ENCODE measurements at regions of chr12 and their contacts with region 1.

Region 1: DNA sequence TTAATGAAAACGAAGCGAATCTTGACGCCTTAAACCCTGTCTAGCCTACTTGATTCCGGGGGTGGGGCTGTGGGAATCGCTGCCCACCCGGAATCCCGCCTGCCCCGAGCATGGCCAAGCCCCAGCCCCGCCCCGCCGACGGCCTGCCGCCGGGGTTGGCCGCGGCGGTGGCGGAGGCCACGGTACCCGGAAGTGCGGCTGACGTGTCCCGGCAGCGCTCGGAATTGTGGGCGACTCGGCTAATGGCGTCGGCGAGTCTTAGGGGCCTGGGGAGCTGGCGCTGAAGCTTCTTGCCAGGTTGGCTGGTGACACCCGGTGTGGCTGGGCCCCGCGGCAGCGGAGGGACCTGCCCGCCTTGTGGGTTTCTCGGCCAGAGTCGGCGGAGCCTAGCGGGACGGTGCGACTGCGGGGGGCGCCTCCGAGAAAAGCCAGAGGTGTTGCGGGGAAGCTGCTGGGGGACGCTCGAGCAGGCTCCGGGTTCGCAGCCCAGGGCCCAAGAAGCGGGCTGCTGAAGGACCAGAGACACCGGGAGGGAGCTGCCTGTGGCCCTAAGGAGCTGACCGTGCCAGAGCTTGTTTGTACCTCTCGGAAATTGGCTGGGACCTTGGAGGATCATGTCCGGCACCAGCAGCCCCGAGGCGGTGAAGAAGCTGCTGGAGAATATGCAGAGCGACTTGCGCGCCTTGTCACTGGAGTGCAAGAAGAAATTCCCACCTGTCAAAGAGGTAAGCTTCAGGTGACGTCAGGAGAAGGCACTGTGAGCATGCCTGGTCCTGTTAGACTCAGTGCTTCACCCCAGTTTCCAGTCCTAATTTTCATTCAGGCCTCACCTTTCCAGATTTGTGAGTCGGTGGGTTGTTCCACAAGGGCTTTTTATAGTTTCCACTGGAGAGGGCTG is at the start of gene MON2:
- DNase-seq: peak; percentile 72 to 93 (median 86)
- H3K4me3 ChIP-seq: peak within 1 kb of the TSS; percentile 59 to 99 (median 95)
- H3K27ac ChIP-seq: peak within 1 kb of the TSS in 58 of 59 donors; percentile 55 to 96 (median 88)
- H3K27me3 ChIP-seq: no peaks in the 10 kb centered on the region
- CTCF ChIP-seq: peak in 35 of 56 donors; percentile 4 to 59 (median 35)
- total RNA-seq, gene MON2: 59.2 to 136 (median 95.1) TPM

Region 2: GRCh38 chr12:62259993-62260732 is 206.7 kb before region 1 on chr12 and contains the start of gene USP15:
- intact Hi-C with region 1: loop called in 1 of 2 experiments (anchors 2 kb)
- DNase-seq: peak; percentile 90 to 97 (median 93)
- H3K4me3 ChIP-seq: peak within 1 kb of the TSS; percentile 64 to 100 (median 94)
- H3K27ac ChIP-seq: peak within 1 kb of the TSS; percentile 81 to 99 (median 93)
- H3K27me3 ChIP-seq: no peaks in the 10 kb centered on the region
- CTCF ChIP-seq: peak; percentile 17 to 88 (median 74)
- total RNA-seq, gene USP15: 40.7 to 79.8 (median 56.9) TPM

Region 3: GRCh38 chr12:62400135-62400534 is 66.7 kb before region 1 on chr12:
- intact Hi-C with region 1: no loop called
- DNase-seq: no peak
- H3K4me3 ChIP-seq: no peak overlapping the region
- H3K27ac ChIP-seq: no peak overlapping the region
- H3K27me3 ChIP-seq: no peaks in the 10 kb centered on the region
- CTCF ChIP-seq: no peak

Region 4: GRCh38 chr12:62435303-62436163 is 31.3 kb before region 1 on chr12:
- intact Hi-C with region 1: loop called in 1 of 2 experiments (anchors 1 kb)
- DNase-seq: peak; percentile 5 to 73 (median 60)
- H3K4me3 ChIP-seq: peak overlapping the region; percentile 36 to 82 (median 63)
- H3K27ac ChIP-seq: peak overlapping the region in 1 of 59 donors; percentile 19
- H3K27me3 ChIP-seq: peaks cover 0 to 20% (median 0%) of the 10 kb centered on the region in 45 donors
- CTCF ChIP-seq: peak in 55 of 56 donors; percentile 16 to 69 (median 53)

Region 5: DNA sequence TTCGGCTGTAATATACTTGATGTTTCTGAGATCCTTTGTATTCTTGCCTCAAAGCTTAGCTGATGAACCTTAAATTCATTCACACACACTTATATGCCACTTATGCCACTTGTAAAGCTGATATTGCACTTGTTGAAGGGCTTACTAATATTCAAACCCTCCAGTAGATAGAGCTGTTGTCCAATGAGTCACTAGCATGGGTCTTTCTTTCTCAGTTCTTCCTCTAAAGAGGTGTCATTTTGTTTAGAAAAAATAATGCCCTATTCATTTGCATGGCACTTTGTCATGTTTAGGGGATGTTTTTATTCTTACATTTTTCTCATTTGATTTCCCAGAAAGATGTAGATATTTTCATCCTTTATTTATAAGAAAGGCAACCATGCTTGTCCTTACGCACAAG is 56.1 kb after region 1 on chr12:
- intact Hi-C with region 1: loop called in 1 of 2 experiments (anchors 5 kb)
- DNase-seq: no peak
- H3K4me3 ChIP-seq: no peak overlapping the region
- H3K27ac ChIP-seq: peak overlapping the region in 35 of 59 donors; percentile 0 to 91 (median 37)
- H3K27me3 ChIP-seq: no peaks in the 10 kb centered on the region
- CTCF ChIP-seq: peak in 35 of 56 donors; percentile 7 to 59 (median 31)

Measured in dorsolateral prefrontal cortex (tissue), 120 donors.